GM12878 (cell line): ENCODE measurements at regions of chr4 and their contacts with region 1.

Region 1: DNA sequence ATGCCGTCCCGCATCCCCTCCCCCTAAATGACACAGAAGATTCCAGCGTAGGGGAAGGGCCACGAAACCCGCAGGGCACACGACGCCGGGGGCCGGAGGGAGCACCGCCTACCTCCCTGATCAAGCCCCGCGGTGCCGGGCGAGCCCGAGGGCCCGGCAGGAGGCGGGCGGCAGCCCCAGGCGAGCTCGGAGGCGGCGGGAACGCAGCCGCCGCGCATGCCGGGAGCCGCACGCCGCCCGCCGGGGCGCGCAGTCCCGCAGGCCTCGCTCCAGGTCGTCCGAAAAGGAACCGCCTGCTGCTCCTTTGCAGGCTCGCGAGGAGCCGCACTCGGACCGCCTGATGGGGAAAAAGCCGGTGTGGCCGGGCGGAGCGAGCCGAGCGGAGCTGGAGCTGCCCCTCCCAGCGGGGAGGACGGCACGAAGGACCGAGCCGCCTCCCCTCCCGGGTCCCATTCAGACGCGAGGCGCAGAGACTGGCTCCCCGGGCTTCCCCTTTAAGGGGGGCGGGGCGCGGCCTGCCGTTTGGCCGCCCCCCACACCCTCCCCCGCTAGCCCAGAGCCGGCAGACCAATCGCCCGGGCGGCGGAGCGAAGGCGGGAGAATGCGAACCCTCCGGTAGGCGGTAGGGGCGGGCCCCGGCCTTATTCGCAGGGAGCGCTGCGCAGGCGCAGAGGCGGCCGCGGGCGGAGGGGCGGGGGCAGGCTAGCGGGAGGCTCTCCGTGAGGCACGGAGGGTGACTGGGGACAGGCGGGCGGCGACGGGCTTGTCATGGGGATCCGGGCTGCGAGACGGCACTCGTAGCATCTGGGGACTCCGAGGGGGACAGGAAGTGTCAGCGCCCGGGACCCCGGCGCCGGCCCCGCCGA is 561 bp upstream of the ING2 start:
- DNase-seq: peak; percentile 80
- ATAC-seq: peak; percentile 85
- H3K4me3 ChIP-seq: peak overlapping the region; percentile 82
- H3K27ac ChIP-seq: peak overlapping the region; percentile 85
- H3K4me1 ChIP-seq: peaks cover 3% of the 10 kb centered on the region; the same call in 1 of the 2 replicates
- H3K27me3 ChIP-seq: no peaks in the 10 kb centered on the region
- CTCF ChIP-seq: peak in 2 of 3 experiments; percentile 16 to 35; a peak in 3 of 6 replicates
- EP300 ChIP-seq: no peak
- POLR2A ChIP-seq: peak; percentile 83
- RAD21 ChIP-seq: peak; percentile 27; the same call in 1 of the 2 replicates

Region 2: GRCh38 chr4:182917182-182918043 is 586.9 kb before region 1 on chr4 and contains the start of gene DCTD:
- CTCF ChIA-PET with region 1: no interaction called
- POLR2A ChIA-PET with region 1: no interaction called
- RAD21 ChIA-PET with region 1: no interaction called
- SMC1A ChIA-PET with region 1: no interaction called
- in situ Hi-C with region 1: no loop called
- intact Hi-C with region 1: loop called (anchors 5 kb)
- DNase-seq: no peak
- ATAC-seq: peak; percentile 89
- H3K4me3 ChIP-seq: peak within 1 kb of the TSS; percentile 81
- H3K27ac ChIP-seq: peak within 1 kb of the TSS; percentile 99
- H3K4me1 ChIP-seq: peaks cover 19% of the 10 kb centered on the region
- H3K27me3 ChIP-seq: no peaks in the 10 kb centered on the region
- CTCF ChIP-seq: peak; percentile 56 to 62 (median 61)
- EP300 ChIP-seq: peak; percentile 9 to 38; a peak in 2 of 4 replicates
- POLR2A ChIP-seq: peak; percentile 87
- RAD21 ChIP-seq: no peak
- polyA plus RNA-seq, gene DCTD: 37.8 to 58.4 TPM

Region 3: GRCh38 chr4:183287677-183288076 is 216.6 kb before region 1 on chr4:
- CTCF ChIA-PET with region 1: no interaction called
- POLR2A ChIA-PET with region 1: no interaction called
- RAD21 ChIA-PET with region 1: no interaction called
- SMC1A ChIA-PET with region 1: no interaction called
- in situ Hi-C with region 1: no loop called
- intact Hi-C with region 1: loop called (anchors 10 kb)
- DNase-seq: no peak
- ATAC-seq: peak; percentile 81
- H3K4me3 ChIP-seq: no peak overlapping the region
- H3K27ac ChIP-seq: no peak overlapping the region
- H3K4me1 ChIP-seq: no peaks in the 10 kb centered on the region
- H3K27me3 ChIP-seq: no peaks in the 10 kb centered on the region
- CTCF ChIP-seq: no peak
- EP300 ChIP-seq: no peak
- POLR2A ChIP-seq: no peak
- RAD21 ChIP-seq: no peak

Region 4: DNA sequence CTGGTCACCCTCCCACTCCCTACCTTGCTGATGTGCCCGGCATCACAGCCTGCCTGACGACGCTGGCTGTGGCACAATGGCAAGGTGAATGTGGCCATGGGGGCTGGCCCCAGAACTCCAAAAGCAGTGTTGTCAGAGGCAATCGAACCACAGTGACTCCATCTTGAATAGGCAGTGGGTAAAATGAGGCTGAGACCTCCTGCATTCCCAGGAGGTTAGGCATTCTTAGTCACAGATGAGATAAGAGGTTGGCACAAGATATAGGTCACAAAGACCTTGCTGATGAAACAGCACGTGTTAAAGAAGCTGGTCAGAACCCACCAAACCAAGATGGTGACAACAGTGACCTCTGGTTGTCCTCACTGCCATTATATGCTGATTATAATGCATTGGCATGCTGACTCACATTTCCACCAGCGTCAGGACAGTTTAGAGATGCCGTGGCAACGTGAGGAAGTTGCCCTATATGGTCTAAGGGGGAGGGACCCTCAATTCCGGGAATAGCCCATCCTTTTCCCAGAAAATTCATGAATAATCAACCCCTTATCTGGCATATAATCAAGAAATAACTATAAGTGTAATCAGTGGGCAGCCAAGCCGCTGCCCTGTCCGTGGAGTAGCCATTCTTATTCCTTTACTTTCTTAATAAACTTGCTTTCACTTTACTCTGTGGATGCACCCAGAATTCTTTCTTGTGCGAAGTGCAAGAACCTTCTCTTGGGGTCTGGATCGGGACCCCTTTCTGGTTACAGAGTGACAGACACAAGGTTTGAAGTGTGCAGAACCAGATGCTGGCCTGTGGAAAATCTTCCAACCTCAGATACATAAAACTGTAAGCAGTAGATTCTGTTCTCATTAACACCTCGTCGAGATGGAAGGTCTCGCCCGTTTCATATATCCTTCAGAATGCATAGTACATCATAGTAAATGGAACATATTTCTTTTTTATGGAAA is 155.3 kb before region 1 on chr4:
- CTCF ChIA-PET with region 1: no interaction called
- POLR2A ChIA-PET with region 1: no interaction called
- RAD21 ChIA-PET with region 1: no interaction called
- SMC1A ChIA-PET with region 1: no interaction called
- in situ Hi-C with region 1: no loop called
- intact Hi-C with region 1: no loop called
- DNase-seq: no peak
- ATAC-seq: peak; percentile 49; the same call in 2 of the 3 replicates
- H3K4me3 ChIP-seq: no peak overlapping the region
- H3K27ac ChIP-seq: no peak overlapping the region
- H3K4me1 ChIP-seq: no peaks in the 10 kb centered on the region
- H3K27me3 ChIP-seq: no peaks in the 10 kb centered on the region; a peak in 1 of 4 replicates
- CTCF ChIP-seq: no peak
- EP300 ChIP-seq: no peak
- POLR2A ChIP-seq: no peak
- RAD21 ChIP-seq: no peak

Region 5: GRCh38 chr4:183444214-183445066 is 59.9 kb before region 1 on chr4 and contains the start of gene CDKN2AIP:
- CTCF ChIA-PET with region 1: no interaction called
- POLR2A ChIA-PET with region 1: interaction called, 7 read pairs
- RAD21 ChIA-PET with region 1: no interaction called
- SMC1A ChIA-PET with region 1: interaction called, 4 read pairs
- in situ Hi-C with region 1: no loop called
- intact Hi-C with region 1: loop called (anchors 2 kb)
- DNase-seq: peak; percentile 60
- ATAC-seq: peak; percentile 92
- H3K4me3 ChIP-seq: peak within 1 kb of the TSS; percentile 79
- H3K27ac ChIP-seq: peak within 1 kb of the TSS; percentile 89
- H3K4me1 ChIP-seq: peaks cover 7% of the 10 kb centered on the region
- H3K27me3 ChIP-seq: no peaks in the 10 kb centered on the region
- CTCF ChIP-seq: peak; percentile 12 to 22 (median 14); a peak in 3 of 6 replicates
- EP300 ChIP-seq: peak in 1 of 2 experiments; percentile 19; a peak in 1 of 4 replicates
- POLR2A ChIP-seq: peak; percentile 93
- RAD21 ChIP-seq: no peak
- polyA plus RNA-seq, gene CDKN2AIP: 6.0 to 9.6 TPM

Region 6: DNA sequence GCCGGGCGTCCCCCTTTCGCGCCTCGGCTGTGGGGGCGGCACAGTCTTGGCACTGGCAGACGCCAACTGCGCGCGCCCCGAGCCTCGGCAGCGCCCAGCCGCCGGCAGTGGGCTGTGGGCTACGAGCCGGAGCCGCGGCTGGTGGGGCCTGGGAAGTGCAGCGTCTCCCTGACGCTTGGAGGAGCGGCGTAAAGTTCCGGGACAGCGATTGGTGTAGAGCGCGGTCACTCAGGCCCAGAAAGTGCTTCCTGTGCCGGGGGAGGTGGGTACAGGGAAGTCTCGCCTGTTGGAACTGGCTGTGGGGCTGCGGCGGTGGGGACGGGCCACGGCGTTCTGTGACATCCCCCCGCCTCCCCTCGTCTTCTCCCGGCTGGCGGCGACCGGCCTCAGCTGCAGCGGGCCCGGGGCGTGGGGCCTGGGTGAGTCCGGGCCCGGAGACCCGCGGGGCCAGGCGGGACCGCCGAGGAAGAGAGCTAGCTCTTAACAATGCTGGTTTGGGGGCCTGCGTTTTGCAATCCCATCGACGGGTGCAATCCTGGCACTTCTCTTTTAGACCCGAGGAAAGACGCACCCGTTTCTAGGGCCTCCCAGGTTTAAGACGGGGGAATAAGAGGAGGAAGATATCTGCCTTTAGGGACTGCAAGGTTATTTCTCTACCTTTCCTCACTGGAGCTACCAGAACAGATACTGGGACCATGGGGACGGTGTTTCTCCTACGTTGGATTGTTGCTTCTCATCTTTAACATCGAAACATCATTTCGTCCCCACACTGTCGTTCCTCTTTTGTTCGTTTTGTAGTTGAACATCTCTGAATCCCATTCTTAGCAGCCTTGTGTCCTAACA is 155.0 kb after region 1 on chr4 and contains the starts of genes RWDD4 and TRAPPC11:
- CTCF ChIA-PET with region 1: no interaction called
- POLR2A ChIA-PET with region 1: interaction called, 4 read pairs
- RAD21 ChIA-PET with region 1: no interaction called
- SMC1A ChIA-PET with region 1: no interaction called
- in situ Hi-C with region 1: no loop called
- intact Hi-C with region 1: loop called (anchors 2 kb)
- DNase-seq: peak; percentile 95
- ATAC-seq: peak; percentile 99
- H3K4me3 ChIP-seq: peak within 1 kb of the TSS; percentile 80
- H3K27ac ChIP-seq: peak within 1 kb of the TSS; percentile 84
- H3K4me1 ChIP-seq: no peaks in the 10 kb centered on the region
- H3K27me3 ChIP-seq: no peaks in the 10 kb centered on the region
- CTCF ChIP-seq: no peak
- EP300 ChIP-seq: no peak
- POLR2A ChIP-seq: peak; percentile 80
- RAD21 ChIP-seq: no peak
- polyA plus RNA-seq, gene RWDD4: 11.2 to 12.2 TPM
- polyA plus RNA-seq, gene TRAPPC11: 7.3 to 10.0 TPM

Region 7: GRCh38 chr4:183716302-183716701 is 212.0 kb after region 1 on chr4:
- CTCF ChIA-PET with region 1: no interaction called
- POLR2A ChIA-PET with region 1: no interaction called
- RAD21 ChIA-PET with region 1: interaction called, 4 read pairs
- SMC1A ChIA-PET with region 1: no interaction called
- in situ Hi-C with region 1: no loop called
- intact Hi-C with region 1: loop called (anchors 10 kb)
- DNase-seq: no peak
- ATAC-seq: no peak
- H3K4me3 ChIP-seq: no peak overlapping the region
- H3K27ac ChIP-seq: no peak overlapping the region
- H3K4me1 ChIP-seq: no peaks in the 10 kb centered on the region
- H3K27me3 ChIP-seq: no peaks in the 10 kb centered on the region
- CTCF ChIP-seq: no peak
- EP300 ChIP-seq: no peak
- POLR2A ChIP-seq: no peak
- RAD21 ChIP-seq: no peak

Region 8: DNA sequence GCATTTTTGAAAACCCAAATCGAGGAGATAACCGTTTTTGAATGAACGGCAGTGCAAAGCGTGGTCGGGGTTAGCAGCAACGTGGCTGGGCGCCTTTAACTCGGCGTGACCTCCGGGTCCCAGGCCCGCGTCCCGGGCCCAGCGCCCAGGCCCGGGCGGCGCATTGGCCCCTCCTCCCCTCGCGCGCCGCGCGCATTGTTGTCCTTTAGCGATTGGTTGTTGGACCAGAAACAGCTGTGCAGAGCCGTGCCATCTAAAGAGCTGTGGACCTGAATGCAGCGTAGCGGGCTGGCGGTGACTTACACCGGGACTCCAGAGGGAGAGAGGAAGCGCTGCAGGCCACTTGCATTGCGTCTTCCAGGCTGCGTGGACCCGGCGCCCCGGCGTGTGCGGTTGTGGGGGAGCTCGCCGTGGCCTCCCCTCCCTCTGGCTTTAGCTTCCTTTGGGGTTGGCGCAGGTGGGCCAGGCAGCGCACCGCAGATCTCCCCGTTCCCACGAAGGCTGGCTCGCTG is 400.8 kb after region 1 on chr4 and contains the start of gene STOX2:
- CTCF ChIA-PET with region 1: no interaction called
- POLR2A ChIA-PET with region 1: no interaction called
- RAD21 ChIA-PET with region 1: no interaction called
- SMC1A ChIA-PET with region 1: no interaction called
- in situ Hi-C with region 1: no loop called
- intact Hi-C with region 1: no loop called
- DNase-seq: no peak
- ATAC-seq: no peak
- H3K4me3 ChIP-seq: no peak within 1 kb of the TSS
- H3K27ac ChIP-seq: no peak within 1 kb of the TSS
- H3K4me1 ChIP-seq: no peaks in the 10 kb centered on the region
- H3K27me3 ChIP-seq: peaks cover 4 to 12% of the 10 kb centered on the region in 2 experiments
- CTCF ChIP-seq: no peak
- EP300 ChIP-seq: no peak
- POLR2A ChIP-seq: no peak
- RAD21 ChIP-seq: no peak
- polyA plus RNA-seq, gene STOX2: 0.05 TPM in 1 of 2 experiments, not detected in the other